ENCODE measurements at regions of chr1 and their contacts with region 1.

Region 1: DNA sequence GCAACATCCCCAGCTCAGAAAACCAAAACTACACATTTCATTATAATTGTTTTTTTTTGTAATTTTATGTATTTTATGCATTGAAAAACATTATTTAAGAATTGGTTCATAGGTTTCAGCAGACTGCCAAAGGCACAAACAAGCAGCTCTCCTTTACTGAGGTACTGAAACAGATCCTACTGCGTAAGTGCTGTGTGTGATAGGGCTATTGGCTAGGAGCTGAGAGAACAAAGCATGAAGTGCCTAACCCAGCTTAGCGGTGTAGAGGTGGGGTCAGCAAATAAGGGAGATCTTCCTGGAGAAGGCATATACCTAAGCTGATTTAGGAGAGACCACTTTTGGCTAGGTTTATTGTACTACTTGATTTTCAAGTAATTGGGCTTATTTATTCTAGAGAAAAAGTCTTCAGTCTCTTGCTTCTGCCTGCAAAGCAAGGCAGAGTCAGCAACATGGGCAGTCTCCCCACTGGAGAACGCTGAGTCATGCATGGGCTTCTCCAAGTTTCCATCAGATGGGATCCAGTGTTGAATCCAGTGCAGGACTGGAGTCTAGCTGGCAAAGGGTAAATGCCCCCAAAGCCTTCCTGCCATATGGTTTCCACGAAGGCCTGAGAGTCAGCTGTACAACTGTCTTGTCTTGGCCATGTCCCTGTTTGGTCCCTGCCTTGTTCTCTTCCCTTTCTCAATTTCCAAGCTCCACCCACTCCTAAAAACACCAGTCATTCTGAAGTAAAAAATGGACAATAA is 18.0 kb upstream of the YTHDF2 start:
- DNase-seq: no peak
- CTCF ChIP-seq: no peak

Region 2: GRCh38 chr1:28751315-28752060 is 32.7 kb after region 1 on chr1:
- CTCF ChIA-PET with region 1: interaction called, 3 read pairs
- POLR2A ChIA-PET with region 1: interaction called, 11 read pairs
- DNase-seq: no peak
- CTCF ChIP-seq: no peak

Region 3: GRCh38 chr1:29050166-29050565 is 331.4 kb after region 1 on chr1:
- CTCF ChIA-PET with region 1: no interaction called
- POLR2A ChIA-PET with region 1: no interaction called
- DNase-seq: no peak
- CTCF ChIP-seq: no peak